HCT116 (cell line): ENCODE measurements at regions of chr4 and their contacts with region 1.

Region 1: GRCh38 chr4:108570993-108571569 is 49.3 kb upstream of the RPL34 start:
- DNase-seq: no peak
- ATAC-seq: no peak
- H3K4me3 ChIP-seq: no peak overlapping the region
- H3K27ac ChIP-seq: no peak overlapping the region
- H3K4me1 ChIP-seq: no peaks in the 10 kb centered on the region
- H3K27me3 ChIP-seq: no peaks in the 10 kb centered on the region
- CTCF ChIP-seq: no peak
- POLR2A ChIP-seq: no peak
- RAD21 ChIP-seq: no peak

Region 2: GRCh38 chr4:108030332-108030731 is 540.7 kb before region 1 on chr4:
- CTCF ChIA-PET with region 1: interaction called, 12 read pairs
- POLR2A ChIA-PET with region 1: no interaction called
- RAD21 ChIA-PET with region 1: no interaction called
- intact Hi-C with region 1: loop called (anchors 1 kb)
- DNase-seq: peak; percentile 16
- ATAC-seq: peak; percentile 90
- H3K4me3 ChIP-seq: no peak overlapping the region
- H3K27ac ChIP-seq: no peak overlapping the region
- H3K4me1 ChIP-seq: no peaks in the 10 kb centered on the region
- H3K27me3 ChIP-seq: no peaks in the 10 kb centered on the region
- CTCF ChIP-seq: peak; percentile 37 to 52 (median 39); a peak in 5 of 6 replicates
- POLR2A ChIP-seq: no peak
- RAD21 ChIP-seq: peak; percentile 69

Region 3: GRCh38 chr4:108060164-108060563 is 510.9 kb before region 1 on chr4:
- CTCF ChIA-PET with region 1: interaction called, 29 read pairs
- POLR2A ChIA-PET with region 1: interaction called, 3 read pairs
- RAD21 ChIA-PET with region 1: interaction called, 3 read pairs
- intact Hi-C with region 1: loop called (anchors 2 kb)
- DNase-seq: peak; percentile 41
- ATAC-seq: peak; percentile 66
- H3K4me3 ChIP-seq: no peak overlapping the region
- H3K27ac ChIP-seq: no peak overlapping the region
- H3K4me1 ChIP-seq: peaks cover 0 to 22% of the 10 kb centered on the region in 2 experiments; a peak in 2 of 4 replicates
- H3K27me3 ChIP-seq: no peaks in the 10 kb centered on the region
- CTCF ChIP-seq: peak; percentile 32 to 57 (median 42); a peak in 4 of 6 replicates
- POLR2A ChIP-seq: no peak
- RAD21 ChIP-seq: peak; percentile 82

Region 4: DNA sequence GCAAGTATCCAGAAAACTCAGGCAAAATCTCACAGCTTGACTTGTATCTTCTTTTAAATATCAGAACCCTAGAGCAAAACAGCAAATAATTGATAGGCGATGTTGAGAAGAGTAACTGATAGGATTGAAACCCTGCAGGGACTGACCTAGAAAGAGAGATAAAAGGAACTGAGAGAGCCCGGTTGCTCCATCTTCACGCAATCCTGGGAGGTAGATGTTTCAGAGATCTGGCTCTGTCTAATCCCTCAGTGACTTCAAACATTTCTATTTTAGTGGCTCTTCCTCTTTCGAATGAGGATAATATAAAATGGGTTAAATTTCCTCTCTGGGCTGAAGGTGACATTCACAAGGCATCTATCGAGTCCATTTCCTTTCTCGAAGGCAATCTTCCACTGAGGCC is 10.0 kb after region 1 on chr4:
- CTCF ChIA-PET with region 1: interaction called, 12 read pairs
- POLR2A ChIA-PET with region 1: no interaction called
- RAD21 ChIA-PET with region 1: no interaction called
- intact Hi-C with region 1: no loop called
- DNase-seq: no peak
- ATAC-seq: no peak
- H3K4me3 ChIP-seq: no peak overlapping the region
- H3K27ac ChIP-seq: no peak overlapping the region
- H3K4me1 ChIP-seq: no peaks in the 10 kb centered on the region
- H3K27me3 ChIP-seq: no peaks in the 10 kb centered on the region
- CTCF ChIP-seq: no peak
- POLR2A ChIP-seq: no peak
- RAD21 ChIP-seq: no peak

Region 5: GRCh38 chr4:109229028-109229427 is 657.9 kb after region 1 on chr4:
- CTCF ChIA-PET with region 1: no interaction called
- POLR2A ChIA-PET with region 1: no interaction called
- RAD21 ChIA-PET with region 1: no interaction called
- intact Hi-C with region 1: no loop called
- DNase-seq: no peak
- ATAC-seq: no peak
- H3K4me3 ChIP-seq: no peak overlapping the region
- H3K27ac ChIP-seq: no peak overlapping the region
- H3K4me1 ChIP-seq: no peaks in the 10 kb centered on the region
- H3K27me3 ChIP-seq: peaks cover 16% of the 10 kb centered on the region; the same call in 1 of the 2 replicates
- CTCF ChIP-seq: no peak
- POLR2A ChIP-seq: no peak
- RAD21 ChIP-seq: no peak